Cardiac septum (tissue), 1 donor: ENCODE measurements at regions of chr5 and their contacts with region 1.

Region 1: DNA sequence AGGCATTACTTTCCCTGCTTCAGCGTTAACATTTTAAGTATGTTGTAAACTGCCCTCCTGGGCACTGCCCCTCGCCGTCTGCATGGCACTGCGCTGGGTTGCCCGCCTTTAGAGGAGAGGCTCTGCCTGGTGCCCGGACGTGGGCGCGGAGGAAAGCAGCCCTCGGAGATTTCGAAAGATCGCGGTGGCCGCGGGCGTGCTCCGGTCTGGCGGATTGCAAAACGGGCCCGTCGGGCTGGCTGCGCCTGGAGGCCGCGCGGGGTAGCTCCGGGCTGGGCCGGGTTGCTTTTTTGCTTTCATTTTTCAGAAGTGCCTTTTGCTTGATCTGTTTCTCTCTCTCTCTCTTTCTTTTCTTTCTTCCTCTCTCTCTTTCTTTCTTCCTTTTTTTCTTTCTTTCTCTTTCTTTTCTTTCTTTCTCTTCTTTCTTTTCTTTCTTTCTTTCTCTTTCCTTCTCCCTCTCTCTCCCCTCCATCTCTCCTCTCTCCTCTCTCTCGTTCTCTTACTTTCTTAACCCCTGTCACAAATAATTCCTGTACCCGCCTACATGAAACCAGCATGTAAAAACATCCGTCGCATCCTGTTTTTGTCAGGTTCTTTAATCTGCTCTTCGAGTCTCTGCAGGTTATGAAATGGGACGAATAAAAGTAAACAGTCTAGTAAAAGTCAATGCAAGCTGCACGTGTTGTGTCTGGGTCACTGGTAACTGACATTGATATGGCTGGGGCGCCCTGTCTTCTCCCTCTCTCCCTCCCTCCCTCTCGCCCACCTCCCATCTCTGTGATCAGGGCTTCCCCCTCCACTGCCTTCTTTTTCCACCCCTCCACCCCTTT is 1.7 kb downstream of the FST start:
- DNase-seq: peak; percentile 87

Region 2: GRCh38 chr5:53515988-53516387 is 33.9 kb after region 1 on chr5:
- intact Hi-C with region 1: no loop called
- DNase-seq: no peak

Region 3: DNA sequence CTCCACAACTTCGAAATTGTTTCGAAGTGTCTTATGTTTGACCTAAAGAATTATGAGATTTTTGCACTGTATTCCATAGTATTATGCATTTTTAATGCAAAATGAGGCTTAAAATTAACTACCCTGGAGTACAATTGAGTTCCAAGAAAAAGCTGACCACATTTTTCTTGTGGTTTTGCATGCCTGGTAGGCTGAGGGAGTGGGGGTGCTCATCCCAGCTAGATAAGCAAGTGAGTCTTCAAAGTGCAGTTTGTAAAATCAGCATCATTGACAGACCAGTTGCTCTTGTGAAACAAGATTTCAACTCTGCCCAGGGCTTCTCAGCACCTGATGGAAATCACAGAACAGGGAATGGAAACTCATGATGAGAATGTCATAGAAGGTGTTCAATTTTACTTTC is 61.3 kb after region 1 on chr5:
- intact Hi-C with region 1: no loop called
- DNase-seq: no peak

Region 4: GRCh38 chr5:53560506-53561191 is 78.5 kb after region 1 on chr5 and contains the start of gene NDUFS4:
- intact Hi-C with region 1: loop called (anchors 5 kb)
- DNase-seq: peak; percentile 92
- total RNA-seq, gene NDUFS4: 117 TPM

Region 5: GRCh38 chr5:53874409-53874808 is 392.3 kb after region 1 on chr5:
- intact Hi-C with region 1: loop called (anchors 5 kb)
- DNase-seq: no peak

Region 6: GRCh38 chr5:53991942-53992341 is 509.8 kb after region 1 on chr5:
- intact Hi-C with region 1: loop called (anchors 5 kb)
- DNase-seq: no peak

Region 7: GRCh38 chr5:54013556-54014194 is 531.6 kb after region 1 on chr5:
- intact Hi-C with region 1: no loop called
- DNase-seq: no peak

Region 8: DNA sequence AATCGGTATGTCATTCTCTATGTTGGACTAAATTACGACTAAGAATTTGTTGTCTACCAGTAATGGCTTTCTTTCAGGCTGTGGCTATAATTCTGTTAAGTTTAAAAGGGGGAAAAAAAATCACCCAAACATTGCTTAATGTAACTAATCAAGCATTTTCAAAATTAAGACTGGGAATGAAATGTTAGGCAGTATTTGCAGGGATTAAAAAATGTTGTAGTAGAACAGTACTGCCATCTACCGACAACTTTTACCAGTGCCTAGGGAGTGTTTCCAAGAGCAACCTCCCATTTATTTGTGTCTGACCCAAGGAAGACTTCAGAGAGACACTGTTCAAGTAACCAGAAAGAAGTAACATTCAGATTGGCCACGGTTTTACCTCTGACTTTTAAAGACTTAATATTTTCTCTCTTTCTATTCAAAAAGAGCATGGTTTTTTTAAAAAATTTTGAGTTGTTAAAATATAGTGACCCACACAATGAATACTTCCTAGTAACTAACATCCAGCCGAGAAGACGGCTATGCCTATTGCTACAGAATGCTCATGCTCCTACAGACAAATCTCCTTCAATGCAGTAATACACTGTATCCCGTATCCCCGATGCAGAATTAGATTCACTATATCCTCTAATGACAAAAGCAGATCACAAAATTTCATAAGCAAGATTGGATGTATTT is 735.9 kb after region 1 on chr5:
- intact Hi-C with region 1: loop called (anchors 2 kb)
- DNase-seq: no peak

Region 9: DNA sequence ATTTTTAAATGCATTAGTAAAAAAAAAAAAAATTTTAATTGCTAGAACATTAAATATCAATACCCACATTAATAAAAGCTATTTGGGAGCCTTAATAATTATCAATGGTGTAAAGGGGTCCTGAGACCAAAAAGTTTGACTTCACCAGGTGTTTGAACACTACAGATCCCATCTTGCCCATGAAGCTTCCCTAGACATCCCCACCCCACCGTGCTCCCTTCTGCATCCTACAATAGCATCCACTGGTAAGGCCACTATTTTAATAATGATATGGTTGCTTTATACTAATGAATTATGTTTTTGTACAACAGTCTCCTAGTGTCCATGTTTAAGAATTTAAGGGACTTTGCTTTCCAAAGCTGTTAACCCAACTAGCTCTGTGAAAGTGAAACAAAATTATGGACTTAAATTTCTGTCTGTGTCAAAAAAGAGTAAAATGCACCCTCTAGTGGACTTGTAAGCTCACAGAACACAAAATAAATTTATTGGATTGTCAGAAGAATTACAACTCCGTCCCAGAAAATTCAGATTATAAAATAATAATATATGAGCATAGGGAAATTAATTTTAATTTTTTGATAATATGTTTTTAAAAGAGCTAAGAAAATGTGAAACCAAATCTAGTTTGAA is 752.3 kb after region 1 on chr5:
- intact Hi-C with region 1: loop called (anchors 5 kb)
- DNase-seq: no peak